ENCODE measurements at regions of chr1 and their contacts with region 1.

Region 1: DNA sequence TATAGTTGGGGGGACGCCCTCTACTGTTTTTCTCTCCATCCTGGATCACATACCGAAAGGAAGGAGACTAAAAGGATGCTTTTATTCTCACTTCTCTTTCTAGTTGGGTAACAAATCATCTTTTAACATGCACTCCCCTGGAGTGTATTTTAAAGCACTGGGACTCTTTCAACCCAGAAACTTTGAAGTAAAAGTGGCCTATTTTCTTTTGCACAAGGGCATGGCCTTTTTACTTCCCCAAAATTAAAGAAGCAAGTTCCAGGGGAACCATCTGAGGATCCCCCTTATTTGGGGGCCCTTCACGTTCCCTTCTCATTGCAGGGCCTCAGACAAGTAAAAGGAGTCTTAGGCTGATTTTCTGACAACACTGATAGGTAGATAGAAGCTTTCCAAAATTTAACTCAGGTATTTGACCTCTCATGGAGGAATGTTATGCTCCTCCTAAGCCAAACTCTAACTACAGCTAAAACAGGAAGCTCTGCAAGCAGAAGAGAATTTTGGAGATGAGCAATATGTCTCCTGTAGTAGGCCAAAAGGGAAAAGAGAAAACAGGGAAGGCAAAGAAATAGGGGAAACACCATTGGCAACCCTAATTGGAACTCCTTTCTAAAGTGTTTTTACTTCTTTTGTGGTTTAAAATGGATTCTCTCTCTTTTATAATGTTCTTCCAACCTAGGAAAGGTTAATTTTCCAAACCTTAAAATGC is 8.9 kb upstream of the CD46 start:
- DNase-seq: no peak
- ATAC-seq: no peak
- H3K4me3 ChIP-seq: no peak overlapping the region
- H3K27ac ChIP-seq: no peak overlapping the region
- H3K4me1 ChIP-seq: peaks cover 21% of the 10 kb centered on the region
- H3K27me3 ChIP-seq: no peaks in the 10 kb centered on the region; a peak in 1 of 5 replicates
- CTCF ChIP-seq: no peak
- EP300 ChIP-seq: no peak
- POLR2A ChIP-seq: no peak
- RAD21 ChIP-seq: no peak

Region 2: DNA sequence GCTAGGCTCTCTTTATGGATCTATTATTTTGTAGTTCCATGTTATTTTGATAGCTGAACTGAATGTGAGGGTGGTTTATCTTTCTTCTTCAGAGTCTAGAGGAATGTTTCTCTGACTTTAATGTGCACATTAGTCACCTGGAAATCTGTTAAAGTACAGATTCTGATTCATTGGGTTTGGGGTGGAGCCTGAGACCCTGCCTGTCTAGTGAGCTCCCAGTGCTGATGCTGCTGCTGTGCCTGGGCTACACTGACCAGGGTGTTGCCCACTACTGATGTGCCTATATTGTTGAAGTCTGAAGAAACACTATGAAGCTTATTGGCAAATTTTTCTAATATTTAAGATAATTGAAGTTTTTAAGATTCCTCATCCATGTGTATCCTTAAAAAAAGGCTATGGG is 44.8 kb after region 1 on chr1:
- CTCF ChIA-PET with region 1: no interaction called
- POLR2A ChIA-PET with region 1: no interaction called
- in situ Hi-C with region 1: no loop called
- intact Hi-C with region 1: loop called (anchors 1 kb)
- DNase-seq: no peak
- ATAC-seq: no peak
- H3K4me3 ChIP-seq: no peak overlapping the region
- H3K27ac ChIP-seq: no peak overlapping the region
- H3K4me1 ChIP-seq: no peaks in the 10 kb centered on the region
- H3K27me3 ChIP-seq: no peaks in the 10 kb centered on the region; a peak in 1 of 5 replicates
- CTCF ChIP-seq: no peak
- EP300 ChIP-seq: no peak
- POLR2A ChIP-seq: no peak
- RAD21 ChIP-seq: no peak